ENCODE measurements at regions of chr20 and their contacts with region 1.

Region 1: GRCh38 chr20:7938058-7938457 is 2.2 kb downstream of the HAO1 start:
- DNase-seq: no peak
- H3K4me3 Mint-ChIP-seq: no peak overlapping the region
- H3K27ac Mint-ChIP-seq: no peak overlapping the region
- H3K4me1 Mint-ChIP-seq: no peaks in the 10 kb centered on the region
- H3K27me3 Mint-ChIP-seq: no peaks in the 10 kb centered on the region

Region 2: GRCh38 chr20:7926767-7927166 is 11.3 kb before region 1 on chr20:
- CTCF ChIA-PET with region 1: interaction called, 10 read pairs
- DNase-seq: no peak
- H3K4me3 Mint-ChIP-seq: no peak overlapping the region
- H3K27ac Mint-ChIP-seq: no peak overlapping the region
- H3K4me1 Mint-ChIP-seq: no peaks in the 10 kb centered on the region
- H3K27me3 Mint-ChIP-seq: no peaks in the 10 kb centered on the region